H1 (cell line): ENCODE measurements at regions of chr5 and their contacts with region 1.

Region 1: DNA sequence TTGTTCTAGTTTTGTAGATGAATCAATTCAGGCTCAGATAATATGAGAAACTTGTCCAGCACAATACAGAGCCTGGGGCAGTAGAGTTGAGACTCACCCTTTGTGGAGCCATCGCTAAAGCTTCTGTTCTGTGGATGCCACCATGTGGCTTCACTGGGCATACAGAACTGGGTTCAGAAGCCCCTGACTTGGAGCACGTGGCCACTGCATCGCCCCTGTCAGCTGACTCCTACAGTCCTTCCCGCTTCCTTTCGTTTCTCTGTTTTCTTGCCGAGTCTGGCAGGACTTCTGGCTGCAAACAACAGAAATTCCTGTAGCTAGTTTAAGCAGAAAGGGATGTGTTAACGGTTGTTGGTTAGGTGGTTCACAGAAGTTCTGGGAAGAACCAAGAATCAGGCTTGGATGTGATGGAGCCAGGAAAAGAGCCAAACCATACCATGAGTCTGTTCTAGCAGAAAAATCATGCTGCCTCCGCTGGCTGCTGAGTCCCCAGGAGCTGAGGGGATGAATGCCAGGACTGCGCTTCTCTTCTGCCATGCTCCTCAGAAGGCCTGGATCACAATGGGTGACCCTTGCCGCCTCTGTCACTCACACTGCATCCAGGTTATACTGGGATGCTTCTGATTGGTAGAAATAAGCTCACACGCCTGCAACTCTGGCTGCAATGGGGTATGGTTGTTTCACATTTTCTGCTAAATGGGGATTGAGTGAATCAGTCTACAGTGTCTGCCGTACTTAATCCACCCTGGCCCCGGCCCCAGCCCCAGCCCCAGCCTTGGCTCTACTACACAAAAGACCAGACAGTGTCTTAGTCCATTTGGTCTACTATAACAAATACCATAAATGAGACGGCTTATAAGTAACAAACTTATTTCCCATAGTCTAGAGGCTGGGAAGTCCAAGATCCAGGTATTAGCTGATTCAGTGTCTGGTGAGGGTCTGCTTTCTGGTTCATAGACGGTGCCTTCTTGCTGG is 262.5 kb downstream of the GOLPH3 start:
- DNase-seq: no peak
- H3K4me3 ChIP-seq: no peak overlapping the region
- H3K27ac ChIP-seq: no peak overlapping the region
- H3K4me1 ChIP-seq: no peaks in the 10 kb centered on the region
- H3K27me3 ChIP-seq: no peaks in the 10 kb centered on the region
- CTCF ChIP-seq: no peak
- EP300 ChIP-seq: no peak
- POLR2A ChIP-seq: no peak
- RAD21 ChIP-seq: peak in 1 of 2 experiments; percentile 1; a peak in 1 of 4 replicates

Region 2: DNA sequence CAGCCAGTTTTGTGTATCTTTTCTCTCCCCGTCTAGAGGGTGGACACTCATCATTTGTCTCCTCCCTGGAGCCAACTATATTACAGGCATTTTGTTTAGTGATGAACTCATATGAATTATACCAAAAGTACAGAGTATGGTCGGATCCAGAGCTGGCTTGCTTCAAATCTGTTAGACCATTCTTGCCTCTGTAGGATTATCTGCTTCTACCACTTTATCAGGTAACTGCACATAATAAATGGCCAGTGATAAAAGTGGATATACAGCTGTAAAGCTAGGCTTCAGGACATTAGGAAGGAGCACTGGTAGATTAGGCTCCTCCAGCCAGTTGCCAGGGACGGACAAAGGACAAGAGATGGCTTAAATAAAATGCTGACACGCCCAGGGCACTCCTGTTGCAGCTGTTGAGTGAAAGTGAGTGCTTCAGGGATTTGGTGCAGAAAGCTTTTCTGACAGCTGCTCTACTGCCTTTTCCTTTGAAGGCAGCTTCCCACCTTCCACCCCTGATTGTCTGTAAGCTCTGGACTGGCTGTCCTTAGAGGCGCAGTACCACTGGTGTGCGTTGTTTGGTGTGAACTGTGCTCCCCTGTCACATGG is 13.4 kb before region 1 on chr5:
- CTCF ChIA-PET with region 1: interaction called, 13 read pairs
- POLR2A ChIA-PET with region 1: no interaction called
- DNase-seq: no peak
- H3K4me3 ChIP-seq: no peak overlapping the region
- H3K27ac ChIP-seq: no peak overlapping the region
- H3K4me1 ChIP-seq: no peaks in the 10 kb centered on the region; a peak in 1 of 7 replicates
- H3K27me3 ChIP-seq: no peaks in the 10 kb centered on the region
- CTCF ChIP-seq: no peak
- EP300 ChIP-seq: no peak
- POLR2A ChIP-seq: no peak
- RAD21 ChIP-seq: no peak

Region 3: GRCh38 chr5:32044939-32045338 is 133.4 kb after region 1 on chr5:
- CTCF ChIA-PET with region 1: interaction called, 13 read pairs
- POLR2A ChIA-PET with region 1: no interaction called
- DNase-seq: no peak
- H3K4me3 ChIP-seq: no peak overlapping the region
- H3K27ac ChIP-seq: no peak overlapping the region
- H3K4me1 ChIP-seq: no peaks in the 10 kb centered on the region
- H3K27me3 ChIP-seq: no peaks in the 10 kb centered on the region
- CTCF ChIP-seq: no peak
- EP300 ChIP-seq: no peak
- POLR2A ChIP-seq: no peak
- RAD21 ChIP-seq: no peak